SK-N-SH (cell line): ENCODE measurements at regions of chr5 and their contacts with region 1.

Region 1: GRCh38 chr5:171207256-171207847 is 101.7 kb upstream of the TLX3 start:
- DNase-seq: peak; percentile 15
- H3K4me3 ChIP-seq: no peak overlapping the region
- H3K27ac ChIP-seq: peak overlapping the region in 1 of 2 experiments; percentile 60; a peak in 2 of 4 replicates
- H3K4me1 ChIP-seq: peaks cover 0 to 28% of the 10 kb centered on the region in 2 experiments; a peak in 2 of 4 replicates
- H3K27me3 ChIP-seq: no peaks in the 10 kb centered on the region
- CTCF ChIP-seq: peak; percentile 74
- EP300 ChIP-seq: no peak
- RAD21 ChIP-seq: peak; percentile 73

Region 2: GRCh38 chr5:170986598-170986997 is 220.8 kb before region 1 on chr5:
- CTCF ChIA-PET with region 1: interaction called, 54 read pairs
- POLR2A ChIA-PET with region 1: no interaction called
- DNase-seq: peak; percentile 10
- H3K4me3 ChIP-seq: no peak overlapping the region
- H3K27ac ChIP-seq: peak overlapping the region in 1 of 2 experiments; percentile 34; a peak in 1 of 4 replicates
- H3K4me1 ChIP-seq: peaks cover 0 to 6% of the 10 kb centered on the region in 2 experiments; a peak in 3 of 4 replicates
- H3K27me3 ChIP-seq: no peaks in the 10 kb centered on the region
- CTCF ChIP-seq: peak; percentile 49
- EP300 ChIP-seq: no peak
- RAD21 ChIP-seq: peak; percentile 90

Region 3: DNA sequence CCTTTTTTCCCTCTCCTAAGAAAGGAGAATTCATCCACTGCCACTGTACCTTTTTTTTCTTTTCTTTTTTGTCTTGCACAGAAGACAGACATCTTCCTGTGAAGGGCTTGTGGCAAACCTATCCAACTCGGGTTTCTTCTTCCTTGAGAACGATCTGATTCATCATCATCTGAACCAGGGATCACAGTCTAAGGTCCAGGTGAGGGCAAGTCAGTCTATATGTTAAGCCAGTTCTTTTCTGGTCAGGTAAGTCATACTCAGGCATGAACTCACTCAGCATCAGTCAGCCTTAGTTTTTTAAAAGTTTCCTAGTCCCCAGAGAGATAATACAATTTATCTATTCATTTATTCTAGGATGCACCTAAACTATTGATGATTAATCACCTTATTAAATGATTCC is 178.6 kb before region 1 on chr5:
- CTCF ChIA-PET with region 1: interaction called, 10 read pairs
- POLR2A ChIA-PET with region 1: no interaction called
- DNase-seq: no peak
- H3K4me3 ChIP-seq: no peak overlapping the region
- H3K27ac ChIP-seq: no peak overlapping the region
- H3K4me1 ChIP-seq: peaks cover 0 to 8% of the 10 kb centered on the region in 2 experiments; a peak in 2 of 4 replicates
- H3K27me3 ChIP-seq: no peaks in the 10 kb centered on the region
- CTCF ChIP-seq: no peak
- EP300 ChIP-seq: no peak
- RAD21 ChIP-seq: no peak

Region 4: DNA sequence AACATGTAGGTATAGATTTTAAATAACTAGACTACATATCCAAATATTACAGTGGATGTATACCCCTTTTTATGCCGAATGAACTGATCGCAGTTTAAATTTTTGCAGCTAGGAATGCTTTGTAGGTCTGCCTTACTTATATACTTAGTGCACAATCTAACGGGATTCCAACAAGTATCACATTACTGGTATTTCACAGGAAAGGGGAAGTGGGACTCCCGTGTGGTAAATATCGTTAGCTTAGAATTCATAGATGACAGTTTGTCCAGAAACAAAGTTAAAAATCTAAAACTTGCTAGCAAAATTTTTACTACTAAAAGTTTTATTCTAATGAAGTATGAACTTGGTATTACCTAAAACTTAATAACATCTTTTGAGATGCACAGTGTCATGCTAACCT is 91.8 kb before region 1 on chr5:
- CTCF ChIA-PET with region 1: no interaction called
- POLR2A ChIA-PET with region 1: no interaction called
- DNase-seq: no peak
- H3K4me3 ChIP-seq: no peak overlapping the region
- H3K27ac ChIP-seq: no peak overlapping the region
- H3K4me1 ChIP-seq: no peaks in the 10 kb centered on the region
- H3K27me3 ChIP-seq: no peaks in the 10 kb centered on the region
- CTCF ChIP-seq: no peak
- EP300 ChIP-seq: no peak
- RAD21 ChIP-seq: no peak

Region 5: GRCh38 chr5:171272996-171273970 is 65.9 kb after region 1 on chr5:
- CTCF ChIA-PET with region 1: interaction called, 11 read pairs
- POLR2A ChIA-PET with region 1: no interaction called
- DNase-seq: peak; percentile 58
- H3K4me3 ChIP-seq: no peak overlapping the region
- H3K27ac ChIP-seq: peak overlapping the region in 1 of 2 experiments; percentile 53; a peak in 2 of 4 replicates
- H3K4me1 ChIP-seq: peaks cover 4 to 16% of the 10 kb centered on the region in 2 experiments; a peak in 3 of 4 replicates
- H3K27me3 ChIP-seq: no peaks in the 10 kb centered on the region
- CTCF ChIP-seq: peak; percentile 67
- EP300 ChIP-seq: 0 out of 4 replicates have a peak, but pooled peaks of 1 of the 2 experiments have one; percentile 3
- RAD21 ChIP-seq: peak; percentile 87

Region 6: GRCh38 chr5:171310212-171310818 is 103.0 kb after region 1 on chr5:
- CTCF ChIA-PET with region 1: interaction called, 12 read pairs
- POLR2A ChIA-PET with region 1: interaction called, 4 read pairs
- DNase-seq: no peak
- H3K4me3 ChIP-seq: peak overlapping the region; percentile 86 to 87
- H3K27ac ChIP-seq: peak overlapping the region in 1 of 2 experiments; percentile 81; a peak in 1 of 4 replicates
- H3K4me1 ChIP-seq: peaks cover 0 to 40% of the 10 kb centered on the region in 2 experiments; a peak in 2 of 4 replicates
- H3K27me3 ChIP-seq: no peaks in the 10 kb centered on the region; the same call in 1 of the 2 replicates
- CTCF ChIP-seq: no peak
- EP300 ChIP-seq: no peak
- RAD21 ChIP-seq: no peak

Region 7: DNA sequence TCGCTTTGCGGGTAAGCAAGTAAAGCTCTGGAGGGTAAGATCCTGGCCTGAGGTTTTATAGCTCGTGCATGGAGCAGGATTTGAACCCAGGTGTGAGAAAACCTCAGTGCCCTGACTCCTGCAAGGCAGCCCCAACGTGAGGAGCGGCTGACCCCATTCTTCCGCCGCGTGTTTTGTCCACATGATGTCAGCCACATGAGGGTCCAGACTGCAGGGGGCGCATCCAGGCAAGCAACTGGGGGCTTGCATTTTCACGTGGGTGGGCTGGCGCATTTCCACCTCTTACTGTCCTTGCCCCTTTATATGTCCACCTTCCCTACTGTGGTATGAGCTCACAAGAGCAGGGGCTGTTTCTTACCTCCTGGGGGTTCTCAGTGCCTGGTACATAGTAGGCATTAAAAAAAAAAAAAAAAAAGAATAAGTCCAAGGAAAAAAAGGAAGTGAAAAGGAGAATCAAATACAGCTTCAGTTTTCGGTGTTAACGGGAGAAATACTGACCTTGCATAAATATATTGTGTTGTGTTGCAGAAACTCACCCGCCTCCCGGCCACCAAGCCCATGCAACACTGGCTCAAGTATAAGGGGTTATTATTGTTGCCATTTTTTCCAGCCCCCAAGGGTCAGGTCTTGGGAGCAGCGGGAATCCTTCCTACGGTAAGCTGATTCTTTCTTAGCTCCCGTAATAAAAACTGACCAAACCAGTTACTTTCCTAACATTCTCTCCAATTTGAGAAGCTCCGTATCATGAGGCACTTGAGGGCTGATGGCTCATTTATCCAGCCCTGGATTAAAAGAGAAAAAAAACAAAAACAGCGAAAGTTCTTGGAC is 116.7 kb after region 1 on chr5:
- CTCF ChIA-PET with region 1: interaction called, 19 read pairs
- POLR2A ChIA-PET with region 1: no interaction called
- DNase-seq: no peak
- H3K4me3 ChIP-seq: no peak overlapping the region
- H3K27ac ChIP-seq: peak overlapping the region in 1 of 2 experiments; percentile 97; a peak in 2 of 4 replicates
- H3K4me1 ChIP-seq: peaks cover 0 to 26% of the 10 kb centered on the region in 2 experiments; a peak in 2 of 4 replicates
- H3K27me3 ChIP-seq: no peaks in the 10 kb centered on the region
- CTCF ChIP-seq: no peak
- EP300 ChIP-seq: no peak
- RAD21 ChIP-seq: no peak